ENCODE measurements at regions of chr12 and their contacts with region 1.

Region 1: DNA sequence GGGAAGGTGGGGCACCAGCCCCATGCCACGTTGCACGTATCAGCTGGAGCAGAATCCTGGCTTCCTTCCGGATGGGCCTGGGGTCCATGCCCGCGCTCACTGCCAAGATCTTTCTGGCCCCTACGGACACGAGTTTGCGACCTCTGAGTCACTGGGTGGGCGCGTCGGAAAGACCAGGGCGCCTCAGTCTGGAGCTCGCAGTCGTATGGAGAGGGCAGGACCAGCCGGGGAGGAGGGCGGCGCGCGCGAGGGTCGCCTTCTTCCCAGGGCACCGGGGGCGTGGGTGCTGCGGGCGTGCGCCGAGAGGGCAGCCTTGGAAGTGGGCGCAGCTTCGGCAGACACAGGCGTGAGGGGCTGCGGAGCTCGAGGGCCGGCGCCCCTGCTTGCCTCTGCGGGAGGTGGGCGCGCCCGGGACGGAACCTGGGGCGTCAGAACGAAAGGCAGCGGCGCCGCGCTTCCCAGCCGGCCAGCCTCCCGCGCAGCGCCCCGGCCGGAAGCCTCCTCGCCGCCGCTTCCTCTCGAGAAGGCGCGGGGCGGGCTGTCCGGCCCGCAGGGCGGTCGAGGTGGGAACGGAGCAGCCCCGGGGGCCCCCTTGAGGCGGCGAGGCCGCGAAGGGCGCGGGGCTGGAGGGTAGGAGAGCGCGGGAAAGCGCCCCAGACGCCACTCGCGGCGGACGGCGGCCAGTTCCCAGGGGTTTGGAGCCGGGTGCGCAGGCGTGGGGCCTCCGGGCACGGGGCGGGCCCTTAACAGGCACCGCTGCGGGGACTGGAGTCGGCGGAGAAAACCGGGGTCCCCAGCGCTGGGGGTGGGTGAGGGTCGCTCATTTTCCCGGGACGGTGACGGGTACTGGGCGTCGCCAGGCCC is at the start of gene ARL6IP4:
- DNase-seq: peak in 38 of 42 donors; percentile 47 to 83 (median 72)

Region 2: DNA sequence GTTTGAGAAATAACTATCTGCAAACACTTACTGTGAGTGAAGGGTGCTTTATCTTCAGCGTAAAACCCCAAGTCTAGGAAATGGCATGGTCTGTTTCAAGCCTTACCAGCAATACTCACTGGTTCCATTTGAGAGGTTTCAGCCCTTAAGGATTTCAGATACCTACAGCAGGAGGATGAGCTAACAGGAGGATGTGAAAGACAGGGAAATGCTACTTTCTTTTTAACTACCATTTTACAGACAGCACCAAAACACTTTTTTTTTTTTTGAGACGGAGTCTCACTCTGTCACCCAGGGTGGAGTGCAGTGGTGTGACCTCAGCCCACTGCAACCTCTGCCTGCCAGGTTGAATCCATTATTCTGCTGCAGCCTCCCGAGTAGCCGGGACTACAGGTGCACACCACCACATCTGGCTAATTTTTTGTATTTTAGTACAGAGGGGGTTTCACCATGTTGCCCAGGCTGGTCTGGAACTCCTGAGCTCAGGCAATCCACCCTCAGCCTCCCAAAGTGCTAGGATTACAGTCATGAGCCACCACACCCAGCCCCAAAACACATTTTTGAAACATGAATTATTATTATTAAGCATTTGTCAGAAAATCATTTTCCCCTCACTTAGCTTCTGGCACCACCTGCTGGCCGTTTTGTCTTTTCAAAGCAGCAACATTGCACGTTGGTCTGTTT is 257.4 kb after region 1 on chr12:
- intact Hi-C with region 1: loop called (anchors 5 kb)
- DNase-seq: peak in 41 of 42 donors; percentile 44 to 88 (median 72)

Measured in head of caudate nucleus (tissue), 42 donors.